ENCODE measurements at regions of chr15 and their contacts with region 1.

Region 1: DNA sequence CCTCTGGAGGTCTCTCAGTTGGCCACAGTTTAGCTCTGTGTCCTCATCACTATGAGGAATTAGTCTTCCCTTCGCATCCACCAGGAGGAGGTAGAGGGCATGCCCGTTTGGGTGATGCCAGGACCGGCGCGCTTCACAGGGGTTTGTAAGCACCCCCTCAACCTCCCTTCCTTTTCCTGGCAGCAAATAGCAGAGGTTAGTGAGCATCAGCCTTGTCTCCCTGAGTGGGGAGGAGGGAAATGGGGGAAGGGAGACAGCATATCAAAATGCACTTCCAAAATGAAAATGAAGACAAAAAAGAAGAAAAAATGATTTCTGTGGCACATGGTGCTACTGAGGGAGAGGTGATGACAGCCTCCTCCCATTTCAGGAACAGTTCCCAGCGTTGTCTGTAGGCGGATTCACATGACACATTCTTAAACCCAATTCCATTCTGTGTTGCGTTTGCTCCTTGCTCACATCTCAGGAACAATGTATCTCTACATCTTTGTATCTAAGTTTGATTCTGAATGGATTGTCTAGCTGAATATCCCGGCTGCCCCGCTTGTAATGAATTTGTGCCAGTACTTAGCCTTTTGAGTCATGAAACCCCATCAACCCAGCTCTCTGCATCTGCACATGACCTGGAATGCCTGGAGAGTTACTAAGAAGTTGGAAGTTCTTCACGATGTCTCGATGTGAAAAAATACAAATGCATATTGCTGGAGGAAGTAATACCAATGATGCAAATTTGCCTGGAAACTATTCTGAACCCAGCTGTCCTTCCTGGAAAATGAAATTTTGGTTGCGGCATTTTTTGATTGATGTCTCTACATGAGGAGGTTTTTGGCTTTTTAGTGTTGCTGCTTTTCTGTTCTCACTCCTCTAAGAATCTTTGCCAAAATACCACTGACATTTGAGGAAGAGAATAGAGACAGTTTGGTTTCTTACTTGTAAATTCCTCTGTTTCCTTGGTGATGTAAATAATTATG is 45.2 kb downstream of the TYRO3 start:
- DNase-seq: peak; percentile 47 to 66
- ATAC-seq: peak; percentile 83 to 95 (median 90)
- H3K4me3 ChIP-seq: peak overlapping the region in 7 of 10 donors; percentile 17 to 41 (median 34)
- H3K27ac ChIP-seq: no peak overlapping the region
- H3K4me1 ChIP-seq: peaks cover 0 to 14% (median 9%) of the 10 kb centered on the region in 9 donors
- H3K27me3 ChIP-seq: no peaks in the 10 kb centered on the region
- CTCF ChIP-seq: peak; percentile 65 to 87 (median 77)

Region 2: DNA sequence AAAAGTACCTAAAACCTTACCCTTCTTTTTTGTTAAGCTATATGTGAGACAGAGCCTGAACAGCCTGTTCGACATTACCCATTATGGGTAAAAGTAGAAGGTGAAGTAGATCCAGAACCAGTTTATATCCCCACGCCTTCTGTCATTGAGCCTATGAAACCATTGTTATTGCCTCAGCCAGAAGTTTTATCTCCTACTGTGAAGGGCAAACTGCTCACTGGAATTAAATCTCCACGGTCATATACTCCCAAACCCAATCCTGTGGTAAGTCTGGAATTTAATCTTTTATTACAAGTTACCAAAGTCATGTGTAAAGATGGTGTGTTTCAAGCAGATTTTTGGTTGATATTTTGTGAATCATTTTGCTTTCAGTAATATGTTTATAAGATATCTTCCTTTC is 122.9 kb after region 1 on chr15:
- intact Hi-C with region 1: loop called in 1 of 10 experiments (anchors 10 kb)
- DNase-seq: no peak
- ATAC-seq: peak in 4 of 8 donors; percentile 55 to 77 (median 72)
- H3K4me3 ChIP-seq: no peak overlapping the region
- H3K27ac ChIP-seq: no peak overlapping the region
- H3K4me1 ChIP-seq: peaks cover 0 to 8% (median 0%) of the 10 kb centered on the region in 9 donors
- H3K27me3 ChIP-seq: no peaks in the 10 kb centered on the region
- CTCF ChIP-seq: no peak

Region 3: DNA sequence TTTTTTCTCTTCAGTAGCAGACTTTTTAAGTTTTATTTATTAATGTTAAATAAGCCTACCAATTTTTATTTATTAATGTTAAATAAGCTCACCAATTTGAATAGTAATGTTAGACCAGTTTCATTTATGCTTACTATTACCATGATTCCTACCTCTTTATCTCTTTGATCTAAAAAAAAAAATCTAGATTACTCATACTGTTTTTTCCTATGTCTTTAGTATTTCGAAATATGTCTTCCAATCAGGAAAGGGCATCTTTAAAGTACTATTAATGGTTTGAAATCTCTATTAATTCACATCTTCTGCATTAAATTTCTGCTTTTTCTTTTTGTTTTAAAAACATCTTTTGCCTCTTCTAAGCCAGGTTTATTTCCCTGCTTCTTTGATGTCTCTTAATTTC is 142.6 kb after region 1 on chr15:
- intact Hi-C with region 1: loop called in 1 of 10 experiments (anchors 5 kb)
- DNase-seq: no peak
- ATAC-seq: no peak
- H3K4me3 ChIP-seq: no peak overlapping the region
- H3K27ac ChIP-seq: no peak overlapping the region
- H3K4me1 ChIP-seq: no peaks in the 10 kb centered on the region
- H3K27me3 ChIP-seq: no peaks in the 10 kb centered on the region
- CTCF ChIP-seq: no peak

Region 4: GRCh38 chr15:41806291-41807181 is 202.3 kb after region 1 on chr15:
- intact Hi-C with region 1: loop called in 7 of 10 experiments (anchors 5 to 10 kb)
- DNase-seq: peak in 1 of 2 donors; percentile 28
- ATAC-seq: peak; percentile 39 to 77 (median 61)
- H3K4me3 ChIP-seq: no peak overlapping the region
- H3K27ac ChIP-seq: no peak overlapping the region
- H3K4me1 ChIP-seq: peaks cover 0 to 39% (median 6%) of the 10 kb centered on the region in 9 donors
- H3K27me3 ChIP-seq: no peaks in the 10 kb centered on the region
- CTCF ChIP-seq: peak in 4 of 9 donors; percentile 12 to 36 (median 28)

Region 5: DNA sequence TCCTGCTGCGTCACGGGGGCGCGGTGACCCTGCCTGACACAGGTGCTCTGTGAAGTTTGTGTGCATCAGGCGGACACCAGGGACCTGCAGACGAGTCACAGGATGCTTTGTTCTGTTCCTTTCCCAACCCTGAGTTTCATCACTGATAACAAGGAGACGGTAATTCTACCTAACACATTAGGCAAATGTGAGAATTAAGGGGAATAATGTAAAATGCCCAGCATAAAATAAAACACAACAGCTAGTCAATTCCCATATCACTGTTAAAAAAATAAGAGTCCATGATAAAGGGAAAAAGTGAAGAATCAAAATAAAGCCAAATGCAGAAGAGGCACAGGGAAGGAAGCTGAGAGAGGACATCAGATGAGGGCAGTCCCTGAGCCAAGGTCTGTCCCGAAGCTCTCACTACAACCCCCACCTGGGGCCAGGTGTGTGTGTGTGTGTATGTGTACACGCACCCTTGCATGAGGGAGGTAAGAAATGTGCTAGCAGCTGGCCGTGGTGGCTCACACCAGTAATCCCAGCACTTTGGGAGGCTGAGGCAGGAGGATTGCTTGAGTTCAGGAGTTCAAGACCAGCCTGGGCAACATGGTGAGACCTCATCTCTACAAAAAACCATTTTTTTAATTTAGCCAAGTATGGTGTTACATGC is 462.7 kb after region 1 on chr15:
- intact Hi-C with region 1: no loop called
- DNase-seq: no peak
- ATAC-seq: no peak
- H3K4me3 ChIP-seq: no peak overlapping the region
- H3K27ac ChIP-seq: no peak overlapping the region
- H3K4me1 ChIP-seq: peaks cover 0 to 11% (median 0%) of the 10 kb centered on the region in 9 donors
- H3K27me3 ChIP-seq: no peaks in the 10 kb centered on the region
- CTCF ChIP-seq: peak in 1 of 9 donors; percentile 27

Measured in heart right ventricle (tissue), 16 donors.